Cardiac septum (tissue), 1 donor: ENCODE measurements at regions of chr6 and their contacts with region 1.

Region 1: DNA sequence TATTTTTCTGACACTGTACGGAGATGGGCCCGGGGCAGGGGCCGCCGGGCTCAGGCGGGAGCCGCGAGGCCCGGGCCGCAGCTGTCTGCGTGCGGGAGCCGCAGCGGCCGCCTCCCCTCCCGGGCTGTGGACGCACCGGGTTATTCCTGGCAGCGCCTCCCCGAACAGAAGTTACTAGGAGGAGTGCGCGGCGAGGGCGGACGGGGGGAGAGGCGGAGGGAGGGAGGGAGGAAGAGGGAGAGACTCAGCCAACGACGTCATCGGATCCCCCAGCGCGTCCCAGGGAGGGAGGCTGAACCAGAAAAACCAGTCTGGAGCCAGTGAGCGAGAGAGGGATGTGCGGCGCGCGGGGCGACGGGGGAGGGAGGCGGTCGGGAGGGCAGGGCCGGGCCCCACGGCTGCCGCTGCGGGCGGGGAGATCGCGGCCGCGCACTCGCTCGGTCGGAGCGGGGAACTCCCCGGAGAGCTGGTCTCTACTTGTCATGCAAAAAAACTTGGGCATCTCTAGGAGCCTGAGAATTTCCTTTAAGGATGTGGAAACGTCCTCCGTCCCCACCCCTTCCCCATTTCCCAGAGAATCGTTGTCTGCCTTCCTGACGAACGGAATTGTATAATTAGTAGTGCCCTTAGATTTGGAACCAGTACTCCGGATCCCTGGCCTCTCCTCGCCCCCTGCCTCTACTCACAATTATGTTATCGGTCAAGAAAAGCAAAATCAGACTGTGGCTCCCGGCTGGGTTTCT is 1.4 kb upstream of the HIVEP2 start:
- DNase-seq: peak; percentile 98

Region 2: DNA sequence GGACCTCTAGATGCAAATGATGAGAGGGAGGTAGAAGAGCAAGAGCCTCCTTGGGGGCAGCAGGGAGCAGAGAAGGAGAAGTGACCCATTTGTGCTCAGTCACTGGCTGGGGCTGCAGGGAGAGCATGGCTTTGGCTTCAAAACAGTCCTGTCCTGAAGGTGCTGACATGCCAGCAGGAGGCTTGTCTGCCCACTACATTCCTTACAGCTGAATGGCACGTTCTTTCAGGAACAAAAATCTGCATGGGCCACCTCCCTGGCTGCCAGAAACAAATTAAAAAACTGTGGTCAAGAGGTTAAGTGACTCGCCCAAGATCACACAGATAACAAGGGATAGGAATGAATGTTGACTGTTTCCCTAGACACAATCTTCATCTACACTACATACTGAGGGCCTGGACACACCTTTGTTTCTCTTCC is 190.1 kb before region 1 on chr6:
- intact Hi-C with region 1: loop called (anchors 5 kb)
- DNase-seq: no peak

Region 3: GRCh38 chr6:142802124-142802523 is 144.2 kb before region 1 on chr6:
- intact Hi-C with region 1: no loop called
- DNase-seq: no peak

Region 4: GRCh38 chr6:142845624-142846458 is 100.5 kb before region 1 on chr6:
- intact Hi-C with region 1: loop called (anchors 1 kb)
- DNase-seq: peak; percentile 93

Region 5: DNA sequence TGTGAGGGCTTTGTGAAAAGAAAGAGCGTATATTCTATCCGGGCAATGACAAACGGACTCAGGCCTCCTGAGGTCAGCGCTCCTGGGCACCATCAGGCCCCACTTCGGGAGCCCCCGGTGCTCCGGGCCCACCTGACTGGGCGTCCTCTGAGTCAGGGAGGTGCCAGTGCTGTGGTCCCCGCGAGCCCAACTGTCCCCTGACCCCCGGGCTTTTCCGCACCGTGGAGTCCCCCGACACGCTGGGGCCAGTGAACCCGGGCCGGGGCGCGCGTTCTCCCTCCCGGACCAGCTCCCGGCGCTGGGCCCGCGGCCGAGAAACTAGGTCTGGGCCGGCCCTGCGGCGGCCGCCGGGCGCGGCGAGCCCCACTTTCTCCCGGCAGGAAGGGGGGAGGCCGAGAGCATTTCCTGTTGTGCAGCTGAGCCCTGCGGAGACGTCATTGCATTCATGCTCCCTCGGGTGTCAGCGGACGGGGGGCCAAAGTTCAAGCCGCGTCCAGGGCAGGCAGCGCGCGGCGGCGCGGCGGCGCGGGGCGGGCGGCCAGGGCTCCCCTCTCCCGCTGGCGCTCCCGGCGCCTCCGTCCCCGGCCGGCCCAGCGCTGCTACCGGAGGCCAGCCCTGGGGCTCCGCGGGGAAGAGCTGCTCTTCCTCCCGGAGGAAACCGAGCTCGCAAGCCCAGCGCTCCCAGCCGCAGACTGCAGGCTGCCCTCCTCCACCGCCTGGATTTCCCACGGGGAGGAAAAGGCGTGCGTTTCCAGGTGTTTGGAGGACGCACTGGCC is 19.7 kb before region 1 on chr6:
- intact Hi-C with region 1: loop called (anchors 2 kb)
- DNase-seq: peak; percentile 94

Region 6: GRCh38 chr6:143060354-143060805 is 114.0 kb after region 1 on chr6:
- intact Hi-C with region 1: loop called (anchors 2 kb)
- DNase-seq: peak; percentile 92

Region 7: DNA sequence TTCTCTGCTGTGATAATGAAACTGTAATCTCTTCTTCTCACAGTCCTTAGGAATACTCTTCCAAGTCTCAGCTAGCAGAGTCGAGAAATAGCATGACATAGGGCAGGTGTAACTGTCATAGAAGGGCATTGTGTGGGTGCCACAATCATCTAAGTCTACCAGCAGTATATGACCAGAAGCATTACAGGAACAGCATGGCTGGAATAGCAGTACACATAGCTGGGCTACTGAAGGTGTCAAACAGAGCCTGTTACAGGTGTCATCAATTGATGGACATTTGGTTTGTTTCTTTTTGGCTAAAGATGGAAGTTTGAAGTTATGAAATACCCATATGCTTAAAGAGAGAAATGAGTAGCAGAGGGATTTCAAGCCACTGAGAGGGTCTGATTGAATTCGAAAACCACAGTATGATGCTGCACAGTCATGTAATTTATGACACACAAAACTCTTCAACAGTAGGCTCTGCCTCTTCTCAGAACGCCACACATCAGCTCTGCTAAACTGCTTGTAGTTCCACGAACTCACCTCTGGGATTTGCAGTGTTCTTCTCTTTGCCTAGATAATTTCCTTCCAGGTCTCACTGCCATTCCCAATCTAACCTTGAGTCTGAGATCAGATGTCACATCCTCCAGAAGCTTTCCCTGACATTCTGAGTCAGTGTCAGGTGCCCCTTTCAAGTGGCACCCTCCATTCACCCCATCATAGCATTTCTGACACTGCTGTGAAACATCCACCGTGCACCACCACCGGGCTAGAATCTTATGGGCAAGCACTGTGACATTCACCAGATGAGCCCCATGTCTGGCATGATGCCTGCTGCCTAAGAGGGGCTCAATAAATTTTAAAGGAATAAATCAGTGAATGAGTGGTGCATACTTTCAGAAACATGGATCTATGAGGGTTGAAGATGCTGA is 353.2 kb after region 1 on chr6:
- intact Hi-C with region 1: no loop called
- DNase-seq: no peak